CD8-positive, alpha-beta T cell (primary cell): ENCODE measurements at regions of chr7 and their contacts with region 1.

Region 1: GRCh38 chr7:100469227-100470044 is 5.4 kb upstream of the SPACDR start:
- DNase-seq: peak; percentile 71 to 93 (median 86)
- ATAC-seq: peak; percentile 97
- H3K4me3 ChIP-seq: no peak overlapping the region
- H3K4me3 Mint-ChIP-seq: no peak overlapping the region
- H3K27ac ChIP-seq: peak overlapping the region in 1 of 2 experiments; percentile 20
- H3K27ac Mint-ChIP-seq: peak overlapping the region; percentile 73
- H3K4me1 ChIP-seq: peaks cover 25% of the 10 kb centered on the region
- H3K4me1 Mint-ChIP-seq: peaks cover 34% of the 10 kb centered on the region
- H3K27me3 ChIP-seq: no peaks in the 10 kb centered on the region
- H3K27me3 Mint-ChIP-seq: no peaks in the 10 kb centered on the region
- CTCF ChIP-seq: peak; percentile 84

Region 2: GRCh38 chr7:100456558-100456957 is 12.9 kb before region 1 on chr7:
- CTCF ChIA-PET with region 1: interaction called, 30 read pairs
- POLR2A ChIA-PET with region 1: interaction called, 4 read pairs
- intact Hi-C with region 1: no loop called
- DNase-seq: no peak
- ATAC-seq: no peak
- H3K4me3 ChIP-seq: no peak overlapping the region
- H3K4me3 Mint-ChIP-seq: no peak overlapping the region
- H3K27ac ChIP-seq: no peak overlapping the region
- H3K27ac Mint-ChIP-seq: no peak overlapping the region
- H3K4me1 ChIP-seq: peaks cover 8% of the 10 kb centered on the region
- H3K4me1 Mint-ChIP-seq: peaks cover 9% of the 10 kb centered on the region
- H3K27me3 ChIP-seq: no peaks in the 10 kb centered on the region
- H3K27me3 Mint-ChIP-seq: no peaks in the 10 kb centered on the region
- CTCF ChIP-seq: no peak

Region 3: DNA sequence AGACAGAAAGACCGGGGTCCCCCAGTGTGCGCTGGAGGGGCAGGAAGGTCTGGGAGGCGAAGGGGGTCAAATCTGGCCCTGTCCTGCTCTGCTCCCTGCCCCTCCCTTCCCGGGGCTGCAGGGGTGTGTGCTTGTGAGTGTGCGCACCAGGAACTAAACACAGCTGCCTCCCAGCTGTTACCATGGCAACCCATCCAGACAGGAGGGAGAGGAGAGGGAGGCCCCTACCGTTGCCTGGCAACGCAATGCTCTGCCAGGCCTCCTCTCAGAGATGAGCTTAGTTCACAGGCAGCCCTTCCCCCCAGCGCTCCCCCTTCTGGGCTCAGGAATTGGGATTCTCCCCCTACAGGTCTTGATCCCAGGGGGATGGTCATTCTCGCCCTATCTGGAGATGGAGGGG is 20.4 kb after region 1 on chr7:
- CTCF ChIA-PET with region 1: interaction called, 15 read pairs
- POLR2A ChIA-PET with region 1: interaction called, 3 read pairs
- intact Hi-C with region 1: no loop called
- DNase-seq: peak in 4 of 9 experiments; percentile 24 to 66 (median 49)
- ATAC-seq: no peak
- H3K4me3 ChIP-seq: no peak overlapping the region
- H3K4me3 Mint-ChIP-seq: no peak overlapping the region
- H3K27ac ChIP-seq: no peak overlapping the region
- H3K27ac Mint-ChIP-seq: no peak overlapping the region
- H3K4me1 ChIP-seq: peaks cover 12% of the 10 kb centered on the region
- H3K4me1 Mint-ChIP-seq: peaks cover 15% of the 10 kb centered on the region
- H3K27me3 ChIP-seq: no peaks in the 10 kb centered on the region
- H3K27me3 Mint-ChIP-seq: no peaks in the 10 kb centered on the region
- CTCF ChIP-seq: no peak

Region 4: DNA sequence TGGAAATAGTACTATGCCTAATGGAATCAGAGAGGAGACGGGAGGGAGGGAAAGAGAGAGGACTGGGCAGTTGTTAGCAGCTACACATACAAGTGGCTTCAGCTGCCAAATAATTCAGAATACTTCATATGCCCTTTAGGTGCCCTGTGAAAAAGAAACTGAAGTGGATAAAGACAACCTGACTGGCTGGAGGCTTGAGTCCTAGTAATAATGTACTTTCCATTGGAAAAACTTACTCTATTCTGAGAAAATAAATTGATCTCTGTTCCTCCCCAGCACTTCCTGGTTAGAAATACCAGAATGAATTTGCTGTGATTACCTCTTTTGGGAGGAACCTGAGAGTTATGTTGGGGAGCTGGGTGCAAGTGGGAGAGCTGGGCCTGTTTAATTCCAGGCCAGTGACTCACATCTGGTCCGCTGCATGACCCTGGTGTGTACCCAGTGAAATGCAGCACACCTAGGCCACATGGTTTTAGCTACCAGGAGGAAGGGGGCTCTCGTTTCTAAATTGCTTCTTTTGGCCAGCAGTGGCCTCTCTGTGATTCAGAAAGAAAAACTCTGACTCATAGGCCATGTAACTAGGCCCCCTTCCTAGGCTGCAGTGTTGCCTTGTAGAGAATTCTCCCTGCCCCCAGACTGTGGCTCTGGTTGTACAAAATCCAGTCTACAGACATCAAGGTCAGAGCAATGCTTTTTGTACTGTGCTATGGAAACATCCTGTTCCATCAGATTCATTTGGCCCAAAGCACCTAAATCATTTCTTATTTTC is 76.1 kb after region 1 on chr7:
- CTCF ChIA-PET with region 1: interaction called, 211 read pairs
- POLR2A ChIA-PET with region 1: no interaction called
- intact Hi-C with region 1: no loop called
- DNase-seq: peak in 6 of 9 experiments; percentile 53 to 65 (median 57)
- ATAC-seq: peak; percentile 75
- H3K4me3 ChIP-seq: peak overlapping the region; percentile 0 to 21
- H3K4me3 Mint-ChIP-seq: peak overlapping the region; percentile 72
- H3K27ac ChIP-seq: peak overlapping the region; percentile 17 to 84
- H3K27ac Mint-ChIP-seq: peak overlapping the region; percentile 91
- H3K4me1 ChIP-seq: peaks cover 91% of the 10 kb centered on the region
- H3K4me1 Mint-ChIP-seq: peaks cover 91% of the 10 kb centered on the region
- H3K27me3 ChIP-seq: no peaks in the 10 kb centered on the region
- H3K27me3 Mint-ChIP-seq: no peaks in the 10 kb centered on the region
- CTCF ChIP-seq: no peak

Region 5: DNA sequence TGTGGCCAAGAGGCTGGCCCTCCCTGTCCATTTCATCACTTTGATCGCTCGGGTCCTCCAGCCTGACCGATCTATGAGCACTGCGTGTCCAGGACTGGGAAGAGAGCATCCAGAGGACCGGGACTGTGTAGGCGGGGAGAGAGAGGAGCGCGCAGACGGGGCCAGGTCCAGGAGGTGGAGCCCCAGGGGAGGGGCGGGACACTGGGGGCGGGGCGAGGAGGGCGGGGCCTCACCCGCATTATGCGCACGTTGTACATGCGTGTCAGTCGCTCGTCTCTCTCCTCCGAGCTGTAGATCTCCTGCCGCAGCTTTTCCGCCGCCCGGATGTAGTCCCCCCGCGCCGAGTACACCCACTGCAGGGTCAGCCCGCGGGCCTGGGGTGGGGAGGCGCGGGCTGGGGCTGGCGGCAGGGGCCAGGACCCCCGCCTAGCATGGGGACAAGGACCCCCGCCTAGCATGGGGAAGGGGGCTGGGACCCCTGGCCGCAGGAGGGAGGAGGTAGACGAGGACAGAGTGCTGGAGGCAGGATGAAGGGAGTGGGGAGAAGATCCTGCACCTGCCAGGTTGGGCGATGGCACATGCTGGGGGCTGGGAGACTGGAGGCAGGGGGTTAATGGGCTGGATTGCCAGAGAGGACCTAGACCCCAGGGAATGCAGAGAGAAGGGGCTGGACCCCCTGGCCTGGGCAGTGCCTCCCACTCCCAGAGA is 157.2 kb after region 1 on chr7:
- CTCF ChIA-PET with region 1: no interaction called
- POLR2A ChIA-PET with region 1: no interaction called
- intact Hi-C with region 1: no loop called
- DNase-seq: peak; percentile 82 to 94 (median 88)
- ATAC-seq: peak; percentile 99
- H3K4me3 ChIP-seq: peak overlapping the region; percentile 40 to 45
- H3K4me3 Mint-ChIP-seq: peak overlapping the region; percentile 70
- H3K27ac ChIP-seq: peak overlapping the region; percentile 56 to 78
- H3K27ac Mint-ChIP-seq: peak overlapping the region; percentile 80
- H3K4me1 ChIP-seq: peaks cover 14% of the 10 kb centered on the region
- H3K4me1 Mint-ChIP-seq: peaks cover 35% of the 10 kb centered on the region
- H3K27me3 ChIP-seq: no peaks in the 10 kb centered on the region
- H3K27me3 Mint-ChIP-seq: no peaks in the 10 kb centered on the region
- CTCF ChIP-seq: no peak

Region 6: GRCh38 chr7:100726996-100727761 is 257.7 kb after region 1 on chr7:
- CTCF ChIA-PET with region 1: interaction called, 6 read pairs
- POLR2A ChIA-PET with region 1: no interaction called
- intact Hi-C with region 1: loop called in 1 of 2 experiments (anchors 1 kb)
- DNase-seq: no peak
- ATAC-seq: no peak
- H3K4me3 ChIP-seq: no peak overlapping the region
- H3K4me3 Mint-ChIP-seq: no peak overlapping the region
- H3K27ac ChIP-seq: no peak overlapping the region
- H3K27ac Mint-ChIP-seq: no peak overlapping the region
- H3K4me1 ChIP-seq: no peaks in the 10 kb centered on the region
- H3K4me1 Mint-ChIP-seq: peaks cover 3% of the 10 kb centered on the region
- H3K27me3 ChIP-seq: peaks cover 0 to 4% of the 10 kb centered on the region in 2 experiments
- H3K27me3 Mint-ChIP-seq: peaks cover 28% of the 10 kb centered on the region
- CTCF ChIP-seq: no peak